CD4-positive, alpha-beta T cell (primary cell): ENCODE measurements at regions of chr2 and their contacts with region 1.

Region 1: DNA sequence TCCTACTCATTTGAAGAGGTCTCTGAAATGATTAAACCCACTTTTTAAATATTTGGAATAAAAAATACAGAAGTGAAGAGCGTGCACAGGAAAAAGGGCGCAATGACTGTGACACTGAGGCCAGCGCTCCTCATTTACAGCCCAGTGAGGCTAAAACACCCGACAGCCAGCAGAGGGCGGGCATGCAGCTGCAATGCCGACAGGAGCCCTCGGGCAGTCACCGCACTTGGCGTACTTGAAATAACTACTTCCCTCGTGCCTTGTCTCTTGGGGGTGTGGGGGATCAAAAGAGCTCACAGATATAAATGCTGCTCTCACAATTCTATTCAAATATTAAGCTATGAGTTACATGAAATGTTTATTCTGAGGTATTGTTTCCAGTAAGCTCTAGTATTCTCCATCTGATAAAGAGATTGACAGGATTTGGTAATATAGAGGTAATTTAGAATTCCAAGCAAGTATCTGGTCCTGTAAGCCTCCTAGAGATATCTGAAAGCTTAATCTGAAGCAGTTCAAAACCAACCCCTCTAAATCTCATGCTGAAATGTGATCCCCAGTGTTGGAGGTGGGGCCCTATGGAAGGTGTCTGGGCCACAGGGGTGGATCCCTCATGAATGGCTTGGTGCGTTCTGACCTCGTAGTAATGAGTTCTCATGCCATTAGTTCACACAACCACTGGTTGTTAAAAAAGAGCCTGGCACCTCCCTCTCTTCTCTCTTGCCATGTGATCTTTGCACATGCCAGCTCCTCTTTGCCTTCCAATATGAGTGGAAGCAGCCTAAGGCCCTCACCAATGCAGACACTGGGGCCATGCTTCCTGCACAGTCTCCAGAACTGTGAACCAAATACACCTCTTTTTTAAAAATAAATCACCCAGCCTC is 93.6 kb downstream of the ZAP70 start:
- DNase-seq: peak; percentile 63 to 84 (median 71)
- ATAC-seq: peak; percentile 97
- H3K4me3 ChIP-seq: no peak overlapping the region
- H3K4me3 Mint-ChIP-seq: no peak overlapping the region
- H3K27ac ChIP-seq: no peak overlapping the region
- H3K27ac Mint-ChIP-seq: no peak overlapping the region
- H3K4me1 ChIP-seq: no peaks in the 10 kb centered on the region
- H3K4me1 Mint-ChIP-seq: no peaks in the 10 kb centered on the region
- H3K27me3 ChIP-seq: no peaks in the 10 kb centered on the region
- H3K27me3 Mint-ChIP-seq: no peaks in the 10 kb centered on the region
- CTCF ChIP-seq: peak; percentile 91

Region 2: DNA sequence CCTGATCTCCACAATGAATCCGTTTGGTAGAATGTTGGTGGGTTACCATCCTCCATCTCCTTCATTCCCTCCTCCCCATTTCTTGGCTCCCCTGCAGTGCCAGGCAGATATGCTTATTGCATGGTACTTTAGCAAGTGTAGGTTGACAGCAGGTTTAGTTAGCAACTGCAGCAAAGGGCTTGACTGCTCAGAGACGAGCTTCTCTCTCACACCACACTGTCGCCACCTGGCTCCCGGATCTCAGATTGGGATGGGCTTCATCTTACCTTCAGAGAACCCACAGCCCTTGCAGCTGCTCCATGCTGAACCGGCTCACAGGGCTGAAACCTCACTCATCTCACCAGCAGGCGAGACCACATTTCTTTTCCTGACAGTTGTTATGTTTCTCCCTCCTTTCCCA is 368.8 kb after region 1 on chr2:
- CTCF ChIA-PET with region 1: no interaction called
- POLR2A ChIA-PET with region 1: no interaction called
- intact Hi-C with region 1: loop called (anchors 5 kb)
- DNase-seq: peak in 1 of 14 experiments; percentile 16
- ATAC-seq: no peak
- H3K4me3 ChIP-seq: no peak overlapping the region
- H3K4me3 Mint-ChIP-seq: no peak overlapping the region
- H3K27ac ChIP-seq: no peak overlapping the region
- H3K27ac Mint-ChIP-seq: no peak overlapping the region
- H3K4me1 ChIP-seq: no peaks in the 10 kb centered on the region
- H3K4me1 Mint-ChIP-seq: no peaks in the 10 kb centered on the region
- H3K27me3 ChIP-seq: peaks cover 21 to 24% of the 10 kb centered on the region in 2 experiments
- H3K27me3 Mint-ChIP-seq: peaks cover 74% of the 10 kb centered on the region
- CTCF ChIP-seq: no peak

Region 3: DNA sequence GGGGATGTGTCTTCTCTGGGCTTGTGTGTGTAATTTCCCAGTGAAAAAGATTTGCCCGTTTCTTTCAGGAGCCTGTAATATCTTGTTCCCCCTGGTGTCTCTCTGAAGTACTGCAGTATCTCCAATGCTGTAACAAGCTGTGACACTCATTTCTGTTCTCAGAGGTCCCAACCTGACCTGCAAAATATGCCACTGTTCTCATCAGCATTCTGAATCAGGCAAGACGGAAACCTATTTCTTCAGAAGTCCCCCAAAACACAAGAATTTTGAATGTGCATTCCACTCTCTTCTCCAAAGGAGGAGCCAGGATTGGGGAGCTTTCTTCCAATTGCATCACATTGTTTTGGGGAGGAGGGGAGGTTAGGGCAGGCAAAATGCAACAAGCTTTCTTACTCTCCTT is 462.3 kb after region 1 on chr2:
- CTCF ChIA-PET with region 1: no interaction called
- POLR2A ChIA-PET with region 1: no interaction called
- intact Hi-C with region 1: loop called in 1 of 2 experiments (anchors 2 kb)
- DNase-seq: peak in 3 of 14 experiments; percentile 27 to 35 (median 35)
- ATAC-seq: no peak
- H3K4me3 ChIP-seq: no peak overlapping the region
- H3K4me3 Mint-ChIP-seq: no peak overlapping the region
- H3K27ac ChIP-seq: no peak overlapping the region
- H3K27ac Mint-ChIP-seq: no peak overlapping the region
- H3K4me1 ChIP-seq: no peaks in the 10 kb centered on the region
- H3K4me1 Mint-ChIP-seq: no peaks in the 10 kb centered on the region
- H3K27me3 ChIP-seq: peaks cover 0 to 7% of the 10 kb centered on the region in 2 experiments
- H3K27me3 Mint-ChIP-seq: peaks cover 11% of the 10 kb centered on the region
- CTCF ChIP-seq: peak; percentile 17

Region 4: DNA sequence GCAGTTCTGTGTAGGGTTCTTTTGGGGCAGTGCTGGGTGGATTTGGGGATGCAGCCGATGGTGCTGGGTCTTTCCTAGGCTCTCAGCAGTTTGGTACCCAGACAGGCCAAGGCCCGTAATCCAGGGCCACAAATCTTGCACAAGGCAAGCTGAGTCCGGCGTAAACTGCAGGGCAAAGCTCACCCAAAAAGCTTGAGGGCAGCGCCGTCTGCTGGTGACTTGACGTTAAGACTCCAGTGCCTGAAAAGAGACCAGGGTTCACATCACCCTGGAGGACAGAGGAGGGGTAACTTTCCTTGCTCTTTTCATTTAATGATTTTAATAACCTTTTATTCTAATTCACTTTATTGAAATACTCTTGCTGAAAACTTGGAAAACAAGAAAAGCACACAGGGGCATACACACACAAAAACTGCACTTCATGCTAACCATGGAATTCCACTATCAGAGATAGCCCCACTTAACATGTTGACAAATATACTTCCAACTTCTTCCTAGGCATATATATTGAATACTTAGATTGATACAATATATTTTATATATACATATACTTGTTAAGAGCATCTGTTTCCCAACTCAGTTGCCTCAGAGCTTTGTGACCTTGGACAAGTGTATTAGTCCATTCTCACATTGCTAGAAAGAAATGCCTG is 578.2 kb after region 1 on chr2:
- CTCF ChIA-PET with region 1: interaction called, 20 read pairs
- POLR2A ChIA-PET with region 1: no interaction called
- intact Hi-C with region 1: loop called (anchors 1 kb)
- DNase-seq: peak; percentile 54 to 81 (median 64)
- ATAC-seq: peak; percentile 78
- H3K4me3 ChIP-seq: no peak overlapping the region
- H3K4me3 Mint-ChIP-seq: no peak overlapping the region
- H3K27ac ChIP-seq: no peak overlapping the region
- H3K27ac Mint-ChIP-seq: no peak overlapping the region
- H3K4me1 ChIP-seq: peaks cover 3% of the 10 kb centered on the region
- H3K4me1 Mint-ChIP-seq: no peaks in the 10 kb centered on the region
- H3K27me3 ChIP-seq: peaks cover 0 to 12% of the 10 kb centered on the region in 2 experiments
- H3K27me3 Mint-ChIP-seq: peaks cover 4% of the 10 kb centered on the region
- CTCF ChIP-seq: peak; percentile 92

Region 5: DNA sequence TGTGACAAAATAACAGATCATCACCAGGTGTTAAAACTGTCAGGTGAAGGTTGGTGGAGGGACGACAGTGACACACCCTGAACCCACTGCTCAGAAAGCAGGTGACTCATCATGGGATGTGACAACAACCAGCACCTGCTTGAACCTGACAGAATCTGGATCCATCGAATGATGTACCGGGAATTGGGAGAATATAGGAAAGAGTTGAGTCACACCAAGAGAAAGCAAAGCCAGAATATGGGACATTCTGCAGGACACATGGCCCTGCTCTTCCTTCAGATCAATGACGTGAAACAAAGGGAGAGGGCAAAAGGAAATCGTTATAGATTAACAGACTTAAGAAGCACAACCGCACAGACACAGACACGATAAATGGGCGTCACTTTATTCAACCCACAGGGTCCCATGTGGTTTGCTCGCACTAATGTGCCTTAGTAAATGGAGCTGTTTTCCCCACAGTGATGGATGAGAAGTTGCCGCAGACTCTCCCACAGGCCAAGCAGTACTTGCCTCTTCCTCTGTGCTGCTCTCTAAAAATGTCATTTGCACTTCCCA is 1028.9 kb after region 1 on chr2:
- CTCF ChIA-PET with region 1: no interaction called
- POLR2A ChIA-PET with region 1: no interaction called
- intact Hi-C with region 1: loop called (anchors 2 to 5 kb)
- DNase-seq: peak; percentile 36 to 88 (median 51)
- ATAC-seq: peak; percentile 85
- H3K4me3 ChIP-seq: no peak overlapping the region
- H3K4me3 Mint-ChIP-seq: peak overlapping the region; percentile 57
- H3K27ac ChIP-seq: peak overlapping the region; percentile 27 to 48
- H3K27ac Mint-ChIP-seq: peak overlapping the region; percentile 94
- H3K4me1 ChIP-seq: peaks cover 42% of the 10 kb centered on the region
- H3K4me1 Mint-ChIP-seq: peaks cover 46% of the 10 kb centered on the region
- H3K27me3 ChIP-seq: no peaks in the 10 kb centered on the region
- H3K27me3 Mint-ChIP-seq: no peaks in the 10 kb centered on the region
- CTCF ChIP-seq: no peak

Region 6: GRCh38 chr2:98842136-98842535 is 1035.2 kb after region 1 on chr2:
- CTCF ChIA-PET with region 1: no interaction called
- POLR2A ChIA-PET with region 1: no interaction called
- intact Hi-C with region 1: loop called (anchors 2 to 5 kb)
- DNase-seq: no peak
- ATAC-seq: no peak
- H3K4me3 ChIP-seq: no peak overlapping the region
- H3K4me3 Mint-ChIP-seq: no peak overlapping the region
- H3K27ac ChIP-seq: no peak overlapping the region
- H3K27ac Mint-ChIP-seq: no peak overlapping the region
- H3K4me1 ChIP-seq: peaks cover 2% of the 10 kb centered on the region
- H3K4me1 Mint-ChIP-seq: peaks cover 2% of the 10 kb centered on the region
- H3K27me3 ChIP-seq: no peaks in the 10 kb centered on the region
- H3K27me3 Mint-ChIP-seq: no peaks in the 10 kb centered on the region
- CTCF ChIP-seq: no peak

Region 7: GRCh38 chr2:99066075-99066958 is 1259.3 kb after region 1 on chr2:
- CTCF ChIA-PET with region 1: no interaction called
- POLR2A ChIA-PET with region 1: no interaction called
- intact Hi-C with region 1: loop called in 1 of 2 experiments (anchors 10 kb)
- DNase-seq: peak in 7 of 14 experiments; percentile 3 to 76 (median 52)
- ATAC-seq: peak; percentile 89
- H3K4me3 ChIP-seq: no peak overlapping the region
- H3K4me3 Mint-ChIP-seq: no peak overlapping the region
- H3K27ac ChIP-seq: peak overlapping the region; percentile 43 to 72
- H3K27ac Mint-ChIP-seq: no peak overlapping the region
- H3K4me1 ChIP-seq: peaks cover 3% of the 10 kb centered on the region
- H3K4me1 Mint-ChIP-seq: peaks cover 5% of the 10 kb centered on the region
- H3K27me3 ChIP-seq: no peaks in the 10 kb centered on the region
- H3K27me3 Mint-ChIP-seq: no peaks in the 10 kb centered on the region
- CTCF ChIP-seq: peak; percentile 7